Activated CD4-positive, alpha-beta T cell treated with anti-CD3 and anti-CD28 coated beads for 36 hours (primary cell): ENCODE measurements at regions of chr6 and their contacts with region 1.

Region 1: DNA sequence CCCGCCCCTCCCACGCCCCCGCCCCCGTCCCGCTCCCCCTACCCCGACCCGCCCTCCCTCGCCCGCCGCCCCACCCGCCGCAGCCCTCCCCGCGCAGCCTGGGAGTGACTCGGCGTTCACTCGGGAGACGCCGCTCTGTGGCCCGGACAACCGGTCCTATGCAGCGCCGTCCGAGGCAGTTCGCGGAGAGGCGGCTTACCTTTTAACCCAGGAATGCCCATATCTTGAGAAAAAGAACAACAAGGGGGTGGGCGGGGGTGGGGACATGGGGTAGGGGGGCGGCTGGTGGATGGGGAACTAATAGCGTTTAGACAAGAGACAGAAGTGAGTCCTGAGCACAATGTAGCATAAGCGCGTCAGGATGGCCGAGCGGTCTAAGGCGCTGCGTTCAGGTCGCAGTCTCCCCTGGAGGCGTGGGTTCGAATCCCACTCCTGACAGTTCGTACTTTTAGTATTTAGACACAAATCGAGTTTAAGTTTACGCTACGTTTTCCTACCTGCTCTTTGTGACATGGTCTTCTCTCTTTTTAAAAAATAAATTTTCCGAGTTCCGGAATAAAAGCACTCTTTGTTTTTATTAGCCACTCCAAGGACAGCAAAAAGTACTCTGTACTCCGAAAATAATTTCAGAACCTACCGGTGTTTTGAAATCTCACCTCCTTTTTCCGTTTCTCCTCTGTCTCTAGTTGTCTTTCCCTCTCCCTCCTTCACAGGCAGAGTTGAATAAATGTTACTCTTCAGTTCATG is 17.1 kb upstream of the HMGN4 start:
- DNase-seq: peak; percentile 89
- ATAC-seq: peak; percentile 73
- H3K4me3 Mint-ChIP-seq: peak overlapping the region; percentile 85
- H3K27ac Mint-ChIP-seq: peak overlapping the region; percentile 94
- H3K4me1 Mint-ChIP-seq: peaks cover 24% of the 10 kb centered on the region
- H3K27me3 Mint-ChIP-seq: no peaks in the 10 kb centered on the region

Region 2: GRCh38 chr6:26532699-26533531 is 11.9 kb after region 1 on chr6:
- CTCF ChIA-PET with region 1: interaction called, 5 read pairs
- POLR2A ChIA-PET with region 1: interaction called, 6 read pairs
- intact Hi-C with region 1: loop called (anchors 1 kb)
- DNase-seq: peak; percentile 94
- ATAC-seq: peak; percentile 40
- H3K4me3 Mint-ChIP-seq: peak overlapping the region; percentile 96
- H3K27ac Mint-ChIP-seq: peak overlapping the region; percentile 95
- H3K4me1 Mint-ChIP-seq: peaks cover 40% of the 10 kb centered on the region
- H3K27me3 Mint-ChIP-seq: no peaks in the 10 kb centered on the region

Region 3: DNA sequence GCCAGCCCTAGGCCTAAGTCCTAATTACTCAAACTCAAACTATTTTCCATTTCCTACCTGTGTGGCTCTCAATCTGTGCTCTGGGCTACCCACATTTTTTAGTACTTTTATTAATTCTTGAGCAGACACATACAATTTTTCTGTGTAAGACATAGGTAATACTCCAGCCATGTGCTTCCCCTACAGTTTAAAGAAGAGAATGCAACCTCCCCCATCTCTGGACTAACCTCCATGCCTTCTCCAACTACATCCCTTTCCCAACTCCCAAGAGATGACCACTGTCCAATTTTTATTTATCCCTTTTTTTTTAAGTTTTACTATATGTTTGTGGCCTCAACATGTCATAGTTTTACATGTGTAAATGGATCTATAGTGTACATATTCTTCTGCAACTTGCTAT is 22.9 kb after region 1 on chr6:
- CTCF ChIA-PET with region 1: no interaction called
- POLR2A ChIA-PET with region 1: no interaction called
- intact Hi-C with region 1: no loop called
- DNase-seq: no peak
- ATAC-seq: peak; percentile 72
- H3K4me3 Mint-ChIP-seq: no peak overlapping the region
- H3K27ac Mint-ChIP-seq: peak overlapping the region; percentile 59
- H3K4me1 Mint-ChIP-seq: peaks cover 40% of the 10 kb centered on the region
- H3K27me3 Mint-ChIP-seq: no peaks in the 10 kb centered on the region

Region 4: DNA sequence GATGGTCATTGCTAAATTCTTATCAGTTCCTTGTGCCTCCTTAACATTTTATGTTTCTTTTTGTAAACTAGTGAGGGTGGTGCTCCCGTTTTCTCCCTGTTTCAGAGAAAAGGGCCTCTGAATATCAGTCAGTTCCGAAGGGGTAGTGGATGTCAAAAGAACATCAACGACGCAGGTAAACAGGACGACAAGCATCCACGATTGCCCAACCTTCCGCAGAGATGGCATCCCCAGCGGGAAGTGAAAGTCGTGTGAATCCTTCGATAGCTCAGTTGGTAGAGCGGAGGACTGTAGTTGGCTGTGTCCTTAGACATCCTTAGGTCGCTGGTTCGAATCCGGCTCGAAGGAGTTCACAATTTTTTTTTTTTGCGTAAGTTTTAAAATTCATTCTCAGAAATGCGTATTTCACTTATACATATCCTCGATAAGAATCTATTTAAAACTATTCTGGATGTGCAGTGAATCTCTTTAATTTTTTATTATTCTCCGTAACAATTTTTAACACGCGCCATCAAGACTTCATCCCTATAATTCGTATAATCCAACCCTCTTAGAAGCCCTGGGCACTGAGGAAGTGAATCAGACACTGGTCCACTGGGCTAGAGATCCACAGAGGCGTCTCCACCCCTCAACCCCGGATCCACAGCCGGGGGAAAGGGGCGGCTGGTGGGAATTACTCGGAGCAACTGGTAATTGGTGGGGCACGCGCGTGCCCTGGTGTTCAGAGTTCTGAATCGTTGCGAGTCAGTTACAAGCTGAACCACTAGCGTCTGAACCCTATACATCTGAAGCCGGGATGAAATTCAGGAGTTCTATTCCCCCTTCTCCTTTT is 47.8 kb after region 1 on chr6:
- CTCF ChIA-PET with region 1: interaction called, 3 read pairs
- POLR2A ChIA-PET with region 1: no interaction called
- intact Hi-C with region 1: loop called in 1 of 2 experiments (anchors 2 kb)
- DNase-seq: peak; percentile 97
- ATAC-seq: peak; percentile 74
- H3K4me3 Mint-ChIP-seq: peak overlapping the region; percentile 85
- H3K27ac Mint-ChIP-seq: peak overlapping the region; percentile 81
- H3K4me1 Mint-ChIP-seq: peaks cover 29% of the 10 kb centered on the region
- H3K27me3 Mint-ChIP-seq: peaks cover 2% of the 10 kb centered on the region